A673 (cell line): ENCODE measurements at regions of chr10 and their contacts with region 1.

Region 1: DNA sequence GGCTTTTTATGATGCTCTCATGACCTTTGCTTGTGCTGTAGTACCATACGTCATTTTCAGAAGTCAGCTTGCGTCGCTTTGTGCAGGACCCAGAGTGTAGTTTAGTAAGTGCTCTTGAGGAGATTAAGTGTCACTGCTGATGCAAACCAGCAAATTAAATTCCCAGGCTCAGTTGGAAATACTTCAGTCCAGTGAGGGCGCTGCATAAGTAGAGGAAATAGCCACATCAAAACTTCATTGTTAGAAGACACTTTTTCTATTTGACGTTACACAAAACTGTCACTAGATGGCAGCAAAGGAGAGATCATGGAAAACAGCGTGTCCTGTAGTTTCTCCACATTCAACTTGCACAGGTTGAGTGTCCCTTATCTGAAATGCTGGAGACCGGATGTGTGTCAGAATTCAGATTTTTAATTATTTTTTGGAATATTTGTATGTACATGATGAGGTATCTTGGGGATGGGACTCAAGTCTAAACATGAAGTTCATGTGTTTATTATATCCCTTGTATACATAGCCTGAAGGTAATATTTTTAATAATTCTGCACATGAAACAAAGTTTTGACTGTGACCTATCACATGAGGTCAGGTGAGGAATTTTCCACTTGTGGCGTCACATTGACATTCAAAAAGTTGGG is 7.9 kb downstream of the ZNF22 start:
- DNase-seq: peak; percentile 94
- H3K4me3 ChIP-seq: no peak overlapping the region
- H3K27ac ChIP-seq: no peak overlapping the region
- H3K4me1 ChIP-seq: peaks cover 3% of the 10 kb centered on the region
- H3K27me3 ChIP-seq: no peaks in the 10 kb centered on the region
- CTCF ChIP-seq: peak; percentile 89

Region 2: GRCh38 chr10:45071043-45071813 is 62.6 kb after region 1 on chr10:
- CTCF ChIA-PET with region 1: no interaction called
- POLR2A ChIA-PET with region 1: no interaction called
- intact Hi-C with region 1: no loop called
- DNase-seq: no peak
- H3K4me3 ChIP-seq: no peak overlapping the region
- H3K27ac ChIP-seq: no peak overlapping the region
- H3K4me1 ChIP-seq: peaks cover 8% of the 10 kb centered on the region
- H3K27me3 ChIP-seq: no peaks in the 10 kb centered on the region
- CTCF ChIP-seq: no peak

Region 3: GRCh38 chr10:45454859-45455258 is 446.2 kb after region 1 on chr10:
- CTCF ChIA-PET with region 1: no interaction called
- POLR2A ChIA-PET with region 1: no interaction called
- intact Hi-C with region 1: loop called (anchors 5 kb)
- DNase-seq: no peak
- H3K4me3 ChIP-seq: no peak overlapping the region
- H3K27ac ChIP-seq: no peak overlapping the region
- H3K4me1 ChIP-seq: no peaks in the 10 kb centered on the region
- H3K27me3 ChIP-seq: no peaks in the 10 kb centered on the region
- CTCF ChIP-seq: no peak

Region 4: GRCh38 chr10:45557275-45557905 is 548.7 kb after region 1 on chr10:
- CTCF ChIA-PET with region 1: no interaction called
- POLR2A ChIA-PET with region 1: no interaction called
- intact Hi-C with region 1: no loop called
- DNase-seq: no peak
- H3K4me3 ChIP-seq: no peak overlapping the region
- H3K27ac ChIP-seq: no peak overlapping the region
- H3K4me1 ChIP-seq: no peaks in the 10 kb centered on the region
- H3K27me3 ChIP-seq: no peaks in the 10 kb centered on the region
- CTCF ChIP-seq: no peak

Region 5: GRCh38 chr10:45672181-45673073 is 663.8 kb after region 1 on chr10 and contains the start of gene ZFAND4:
- CTCF ChIA-PET with region 1: no interaction called
- POLR2A ChIA-PET with region 1: no interaction called
- intact Hi-C with region 1: loop called (anchors 10 kb)
- DNase-seq: peak; percentile 97
- H3K4me3 ChIP-seq: peak within 1 kb of the TSS; percentile 76
- H3K27ac ChIP-seq: peak within 1 kb of the TSS; percentile 34
- H3K4me1 ChIP-seq: no peaks in the 10 kb centered on the region
- H3K27me3 ChIP-seq: no peaks in the 10 kb centered on the region
- CTCF ChIP-seq: 0 out of 2 replicates have a peak, but pooled peaks have one; percentile 23
- total RNA-seq, gene ZFAND4: 9.2 and 10.5 TPM in 2 replicates

Region 6: DNA sequence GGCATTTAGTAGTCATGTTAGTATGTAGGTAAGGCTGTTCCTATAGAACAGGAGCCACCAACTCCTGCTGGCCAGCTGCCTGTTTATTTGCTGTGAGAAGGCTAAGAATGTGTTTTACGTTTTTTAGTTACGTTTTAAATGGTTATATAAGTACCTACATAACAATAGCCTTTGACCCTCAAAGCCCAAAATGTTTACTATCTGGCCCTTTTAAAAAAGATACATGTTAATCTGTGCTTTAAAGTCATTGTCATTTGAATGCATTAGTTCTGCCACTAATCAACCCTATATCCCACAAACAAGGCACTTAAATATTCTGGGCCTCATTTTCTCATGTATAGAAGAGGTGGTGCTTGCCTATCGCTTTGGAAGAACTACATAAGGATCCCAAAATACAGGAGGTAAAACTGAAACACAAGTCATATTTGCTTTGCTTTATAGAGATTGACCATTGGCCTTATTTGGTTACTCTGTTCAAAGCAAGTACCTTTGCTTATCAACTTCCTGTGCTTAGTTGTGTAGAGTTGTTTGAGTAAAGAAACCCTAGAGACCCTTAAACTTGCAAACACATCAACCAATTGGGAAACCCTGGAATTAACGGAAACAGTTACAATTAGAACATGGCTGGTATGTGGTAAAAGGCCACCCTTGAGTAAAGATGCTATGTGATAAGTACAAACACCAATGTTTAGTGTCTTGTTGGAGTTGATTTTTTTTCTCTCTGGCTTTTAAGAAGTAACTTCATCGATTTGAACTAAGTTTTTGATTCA is 989.5 kb after region 1 on chr10:
- CTCF ChIA-PET with region 1: no interaction called
- POLR2A ChIA-PET with region 1: no interaction called
- intact Hi-C with region 1: no loop called
- DNase-seq: no peak
- H3K4me3 ChIP-seq: no peak overlapping the region
- H3K27ac ChIP-seq: no peak overlapping the region
- H3K4me1 ChIP-seq: no peaks in the 10 kb centered on the region
- H3K27me3 ChIP-seq: no peaks in the 10 kb centered on the region
- CTCF ChIP-seq: no peak